Endothelial cell of umbilical vein (primary cell): ENCODE measurements at regions of chr2 and their contacts with region 1.

Region 1: DNA sequence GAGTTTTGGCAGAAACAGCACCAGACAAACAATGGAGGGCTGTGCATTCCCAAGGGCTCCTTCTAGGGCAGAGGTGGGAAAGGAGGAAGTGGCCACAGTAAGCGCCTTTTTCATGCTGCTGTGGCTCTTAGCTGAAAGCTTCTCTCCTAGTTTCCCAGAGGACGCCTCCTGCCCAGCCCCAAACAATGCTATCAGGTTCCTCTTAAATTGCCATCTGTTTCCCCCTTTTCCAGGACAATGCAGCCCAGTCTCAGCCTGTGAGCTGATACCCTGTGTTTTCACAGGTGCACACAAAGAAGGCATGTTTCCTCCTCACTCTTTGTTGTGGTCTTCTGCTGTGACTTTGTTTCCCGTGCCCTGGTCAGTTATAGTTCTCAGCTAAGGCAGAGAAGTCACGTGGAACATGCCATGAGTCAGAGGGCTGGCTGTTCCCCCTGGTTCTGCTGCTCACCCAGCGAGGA is 5.4 kb upstream of the FAM124B start:
- DNase-seq: peak; percentile 100
- H3K4me3 ChIP-seq: no peak overlapping the region
- H3K27ac ChIP-seq: peak overlapping the region; percentile 96
- H3K4me1 ChIP-seq: peaks cover 43% of the 10 kb centered on the region
- H3K27me3 ChIP-seq: no peaks in the 10 kb centered on the region
- CTCF ChIP-seq: no peak
- POLR2A ChIP-seq: peak; percentile 65

Region 2: DNA sequence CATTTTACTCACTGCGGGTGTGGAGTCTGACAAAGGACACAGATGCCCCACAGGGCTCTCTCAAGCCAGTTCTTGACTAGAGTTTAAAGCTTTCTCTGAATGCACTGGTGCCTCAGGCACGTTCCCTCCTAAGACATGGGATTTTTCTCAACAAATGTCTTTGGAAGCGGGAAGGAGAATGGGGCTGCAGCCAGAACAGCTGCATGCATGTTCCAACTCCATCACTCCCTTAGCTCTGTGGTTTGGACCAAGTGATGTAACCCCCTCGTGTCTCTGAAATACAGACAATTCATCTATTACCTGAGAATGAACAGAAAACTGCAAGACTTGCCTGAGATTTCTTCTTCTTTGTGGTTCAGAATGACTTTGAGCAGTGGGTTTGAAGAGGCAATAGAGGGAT is 226.5 kb before region 1 on chr2:
- CTCF ChIA-PET with region 1: no interaction called
- POLR2A ChIA-PET with region 1: no interaction called
- dilution Hi-C with region 1: no loop called
- intact Hi-C with region 1: no loop called
- DNase-seq: no peak
- H3K4me3 ChIP-seq: no peak overlapping the region
- H3K27ac ChIP-seq: no peak overlapping the region
- H3K4me1 ChIP-seq: peaks cover 2% of the 10 kb centered on the region
- H3K27me3 ChIP-seq: no peaks in the 10 kb centered on the region
- CTCF ChIP-seq: no peak
- POLR2A ChIP-seq: no peak

Region 3: DNA sequence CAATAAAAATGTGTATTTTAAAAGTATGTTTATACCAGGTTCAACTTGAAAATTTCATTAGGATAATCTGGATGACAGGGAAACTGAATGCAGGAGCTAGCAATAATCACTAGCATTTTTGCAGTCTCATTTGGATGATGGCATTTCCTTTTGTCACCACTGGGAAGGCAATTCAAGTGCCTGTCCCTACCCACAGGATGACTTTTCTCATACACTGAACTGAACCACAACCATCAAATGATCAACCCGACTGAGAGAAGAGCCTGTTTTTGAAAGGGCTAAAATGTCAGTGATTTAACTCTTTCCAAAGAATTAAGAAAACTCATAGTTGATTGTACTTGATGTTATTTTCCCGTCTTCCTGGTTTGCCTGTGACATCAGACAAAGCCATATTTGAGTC is 120.3 kb before region 1 on chr2:
- CTCF ChIA-PET with region 1: no interaction called
- POLR2A ChIA-PET with region 1: no interaction called
- dilution Hi-C with region 1: no loop called
- intact Hi-C with region 1: no loop called
- DNase-seq: no peak
- H3K4me3 ChIP-seq: no peak overlapping the region
- H3K27ac ChIP-seq: no peak overlapping the region
- H3K4me1 ChIP-seq: no peaks in the 10 kb centered on the region
- H3K27me3 ChIP-seq: peaks cover 10 to 16% of the 10 kb centered on the region in 2 experiments
- CTCF ChIP-seq: no peak
- POLR2A ChIP-seq: no peak

Region 4: GRCh38 chr2:224417350-224418346 is 10.4 kb after region 1 on chr2:
- CTCF ChIA-PET with region 1: interaction called, 4 read pairs
- POLR2A ChIA-PET with region 1: interaction called, 15 read pairs
- dilution Hi-C with region 1: no loop called
- intact Hi-C with region 1: loop called (anchors 1 kb)
- DNase-seq: peak; percentile 94
- H3K4me3 ChIP-seq: no peak overlapping the region
- H3K27ac ChIP-seq: peak overlapping the region; percentile 89
- H3K4me1 ChIP-seq: peaks cover 19% of the 10 kb centered on the region
- H3K27me3 ChIP-seq: no peaks in the 10 kb centered on the region
- CTCF ChIP-seq: no peak
- POLR2A ChIP-seq: no peak

Region 5: DNA sequence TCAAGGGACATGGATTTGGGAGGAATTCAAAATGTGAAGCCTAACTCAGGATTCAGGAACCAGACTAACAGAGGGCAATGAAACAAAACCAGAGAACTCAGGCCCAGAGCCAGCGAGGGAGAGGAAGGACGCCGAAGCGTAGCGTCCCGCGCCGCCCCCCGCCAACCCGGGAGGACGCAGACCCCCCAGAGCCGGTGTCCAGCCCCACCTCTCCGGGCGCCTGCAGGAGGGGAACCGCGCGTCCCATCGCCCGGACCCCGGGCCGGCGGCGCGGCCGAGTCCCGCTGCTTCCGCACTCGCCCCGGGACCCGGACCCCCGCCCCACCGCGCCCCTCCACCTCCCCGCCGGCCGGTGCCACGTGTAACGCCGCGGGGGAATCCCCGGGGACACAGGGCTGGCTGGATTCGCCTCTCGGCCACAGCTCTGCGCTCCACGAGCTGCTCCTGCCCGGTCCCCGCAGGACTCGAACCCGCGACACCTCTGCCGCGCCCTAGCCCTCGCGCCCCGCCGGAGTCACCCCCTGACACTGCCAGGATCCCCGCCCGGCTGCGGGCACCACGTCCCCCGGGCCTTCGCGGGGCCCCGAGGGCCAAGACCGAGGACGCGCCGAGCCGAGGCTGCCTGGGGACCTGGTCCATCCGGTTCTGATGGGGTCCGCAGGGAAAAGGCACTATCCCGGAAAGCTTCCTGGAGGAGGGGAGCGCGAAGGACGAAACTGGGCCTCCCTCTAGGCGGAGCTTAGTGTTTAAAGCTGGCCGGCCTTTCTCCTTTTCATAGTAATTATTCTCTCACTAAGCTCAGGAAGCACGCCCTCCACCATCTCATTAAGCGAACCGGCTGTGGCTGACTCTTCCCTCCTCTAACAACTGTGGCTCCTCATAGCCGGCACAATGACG is 35.0 kb after region 1 on chr2:
- CTCF ChIA-PET with region 1: interaction called, 10 read pairs
- POLR2A ChIA-PET with region 1: interaction called, 7 read pairs
- dilution Hi-C with region 1: no loop called
- intact Hi-C with region 1: loop called (anchors 1 kb)
- DNase-seq: peak; percentile 61
- H3K4me3 ChIP-seq: peak overlapping the region; percentile 44 to 86 (median 69)
- H3K27ac ChIP-seq: peak overlapping the region; percentile 62
- H3K4me1 ChIP-seq: peaks cover 17% of the 10 kb centered on the region
- H3K27me3 ChIP-seq: no peaks in the 10 kb centered on the region
- CTCF ChIP-seq: no peak
- POLR2A ChIP-seq: peak; percentile 24

Region 6: GRCh38 chr2:224449212-224450147 is 42.2 kb after region 1 on chr2:
- CTCF ChIA-PET with region 1: interaction called, 78 read pairs
- POLR2A ChIA-PET with region 1: interaction called, 3 read pairs
- dilution Hi-C with region 1: no loop called
- intact Hi-C with region 1: loop called (anchors 1 kb)
- DNase-seq: peak; percentile 85
- H3K4me3 ChIP-seq: no peak overlapping the region
- H3K27ac ChIP-seq: no peak overlapping the region
- H3K4me1 ChIP-seq: peaks cover 8% of the 10 kb centered on the region
- H3K27me3 ChIP-seq: no peaks in the 10 kb centered on the region
- CTCF ChIP-seq: peak; percentile 52 to 59
- POLR2A ChIP-seq: no peak

Region 7: GRCh38 chr2:224938651-224939182 is 531.4 kb after region 1 on chr2:
- CTCF ChIA-PET with region 1: no interaction called
- POLR2A ChIA-PET with region 1: no interaction called
- dilution Hi-C with region 1: no loop called
- intact Hi-C with region 1: loop called (anchors 1 kb)
- DNase-seq: peak; percentile 94
- H3K4me3 ChIP-seq: peak overlapping the region in 1 of 3 experiments; percentile 4
- H3K27ac ChIP-seq: peak overlapping the region; percentile 47
- H3K4me1 ChIP-seq: peaks cover 44% of the 10 kb centered on the region
- H3K27me3 ChIP-seq: no peaks in the 10 kb centered on the region
- CTCF ChIP-seq: no peak
- POLR2A ChIP-seq: no peak